ENCODE measurements at regions of chr5 and their contacts with region 1.

Region 1: DNA sequence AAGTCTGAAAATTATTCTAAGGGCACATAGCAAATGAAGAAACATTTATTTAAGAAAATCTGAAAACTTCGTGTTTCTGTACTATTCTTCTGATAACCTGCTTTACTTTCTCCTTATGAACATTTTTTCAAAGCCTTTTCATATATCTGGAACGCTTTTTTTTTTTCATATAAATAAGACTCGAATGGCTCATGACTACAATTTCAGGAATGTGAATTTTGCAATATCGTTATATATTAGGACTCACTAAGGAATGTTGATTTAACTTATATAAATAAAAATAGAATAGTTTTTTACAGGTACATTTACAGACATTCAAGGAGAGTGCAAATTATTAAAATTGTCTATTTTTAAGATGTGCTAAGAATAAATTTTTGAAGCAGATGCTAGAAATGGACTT is 42.9 kb downstream of the GPBP1 start:
- DNase-seq: no peak
- H3K4me3 ChIP-seq: no peak overlapping the region
- H3K27ac ChIP-seq: no peak overlapping the region
- H3K4me1 ChIP-seq: peaks cover 0 to 57% (median 25%) of the 10 kb centered on the region in 4 donors
- H3K27me3 ChIP-seq: no peaks in the 10 kb centered on the region
- CTCF ChIP-seq: no peak
- EP300 ChIP-seq: no peak
- POLR2A ChIP-seq: no peak

Region 2: DNA sequence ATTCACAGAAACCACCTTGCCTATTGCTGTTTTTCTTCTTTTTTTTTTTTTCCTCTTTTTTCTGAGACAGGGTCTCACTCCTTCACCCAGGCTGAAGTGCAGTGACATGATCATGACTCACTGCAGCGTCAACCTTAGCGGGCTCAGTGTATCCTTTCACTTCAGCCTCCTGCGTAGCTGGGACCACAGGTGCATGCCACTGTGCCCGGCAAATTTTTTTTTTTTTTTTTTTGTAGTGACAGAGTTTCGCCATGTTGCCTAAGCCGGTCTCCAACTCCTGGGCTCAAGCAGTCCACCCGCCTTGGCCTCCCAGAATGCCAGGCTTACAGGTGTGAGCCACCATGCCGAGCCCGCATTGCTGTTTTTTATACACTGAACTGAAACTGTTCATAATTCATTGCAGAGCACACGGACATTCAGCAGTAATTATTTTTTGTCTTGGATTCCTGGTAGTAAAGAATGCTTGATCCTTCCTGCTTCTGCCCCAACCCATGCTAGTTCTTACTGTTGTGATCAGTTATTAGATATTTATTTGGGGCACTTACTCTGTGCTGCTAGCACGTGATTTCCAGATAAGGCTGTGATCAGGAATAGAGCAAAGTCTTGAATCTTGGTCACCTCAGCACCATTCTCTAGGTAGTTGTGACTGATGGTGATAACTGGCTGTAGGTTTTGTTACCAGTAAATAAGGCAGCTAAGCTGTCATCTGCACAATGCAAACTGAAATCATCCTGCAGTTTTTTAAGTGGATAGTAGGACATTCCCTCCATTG is 387.4 kb before region 1 on chr5:
- intact Hi-C with region 1: no loop called
- DNase-seq: no peak
- H3K4me3 ChIP-seq: no peak overlapping the region
- H3K27ac ChIP-seq: peak overlapping the region in 1 of 5 donors; percentile 22
- H3K4me1 ChIP-seq: peaks cover 42 to 96% (median 74%) of the 10 kb centered on the region in 4 donors
- H3K27me3 ChIP-seq: no peaks in the 10 kb centered on the region
- CTCF ChIP-seq: no peak
- EP300 ChIP-seq: no peak
- POLR2A ChIP-seq: no peak

Region 3: DNA sequence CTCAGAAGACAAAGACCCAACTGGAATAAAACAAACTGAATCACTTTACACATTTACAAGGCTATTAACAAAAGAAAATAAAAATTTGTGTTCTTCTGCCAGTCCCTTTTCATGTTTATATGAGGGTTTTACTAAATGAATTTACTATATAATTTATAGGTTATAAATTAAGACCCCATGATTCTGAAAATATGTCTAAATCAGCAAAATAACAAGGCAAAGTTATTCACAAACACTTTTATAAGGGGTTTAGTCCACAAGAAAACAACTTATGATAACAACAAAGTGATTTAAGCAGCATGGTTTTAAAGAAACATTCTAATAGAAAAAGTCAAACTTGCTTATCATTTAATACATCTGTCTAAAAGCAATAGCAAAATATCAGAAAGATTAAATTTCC is 269.7 kb before region 1 on chr5:
- intact Hi-C with region 1: loop called (anchors 5 kb)
- DNase-seq: no peak
- H3K4me3 ChIP-seq: no peak overlapping the region
- H3K27ac ChIP-seq: no peak overlapping the region
- H3K4me1 ChIP-seq: peaks cover 0 to 29% (median 19%) of the 10 kb centered on the region in 4 donors
- H3K27me3 ChIP-seq: no peaks in the 10 kb centered on the region
- CTCF ChIP-seq: no peak
- EP300 ChIP-seq: no peak
- POLR2A ChIP-seq: no peak

Measured in stomach (tissue), 19 donors.